ENCODE measurements at regions of chr3 and their contacts with region 1.

Region 1: GRCh38 chr3:178768072-178768864 is 232.0 kb downstream of the KCNMB2 start:
- DNase-seq: no peak

Region 2: DNA sequence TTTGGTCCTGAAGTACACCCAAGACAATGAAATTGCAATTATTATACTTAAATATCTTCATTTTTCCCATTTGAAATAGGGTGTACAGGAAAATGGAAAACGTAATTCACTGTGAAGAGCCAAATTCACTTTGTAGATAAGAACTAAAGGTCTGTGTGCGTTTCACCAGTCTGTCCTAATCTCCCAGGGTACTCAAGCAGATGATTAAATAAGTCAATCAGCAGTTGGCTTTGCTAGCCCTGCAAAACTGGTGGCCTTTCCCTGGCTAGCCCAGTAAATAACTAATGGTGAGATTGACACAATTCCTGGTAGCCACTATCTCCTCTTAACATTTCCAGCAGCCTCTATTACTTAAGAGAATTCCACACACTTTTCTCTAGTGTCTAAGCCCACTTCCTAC is 1960.3 kb before region 1 on chr3:
- intact Hi-C with region 1: loop called in 1 of 2 experiments (anchors 5 kb)
- DNase-seq: no peak

Region 3: DNA sequence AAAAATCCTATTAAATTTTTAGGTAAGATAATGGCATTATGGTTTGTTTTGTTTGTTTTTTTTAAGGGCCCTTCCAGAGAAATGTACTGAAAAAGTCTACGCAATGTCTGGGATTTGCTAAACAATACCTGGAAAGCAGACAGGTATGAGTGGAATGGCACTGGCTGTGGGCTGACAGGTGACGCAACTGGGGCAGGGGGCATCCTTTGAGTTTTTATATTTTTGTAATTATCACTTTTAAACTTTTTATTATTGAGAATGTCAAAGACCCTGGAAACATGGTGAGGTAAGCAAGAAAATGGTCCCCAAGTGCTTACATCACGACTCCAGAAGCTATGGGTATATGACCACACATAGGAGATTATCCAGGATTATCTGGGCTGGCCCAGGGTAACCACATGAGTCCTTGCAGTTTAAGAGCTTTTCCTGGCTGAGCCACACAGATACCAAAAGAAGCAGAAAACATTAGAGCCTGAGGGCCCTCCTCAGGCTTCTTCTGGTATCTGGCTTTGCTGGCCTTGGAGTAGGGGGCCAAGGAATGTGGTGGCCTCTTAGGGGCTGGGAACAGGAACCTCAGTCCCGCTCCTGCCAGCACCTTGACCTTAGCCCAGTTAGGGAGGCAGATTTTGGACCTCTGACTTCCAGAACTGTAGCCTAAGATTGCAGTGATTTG is 26.9 kb after region 1 on chr3:
- intact Hi-C with region 1: no loop called
- DNase-seq: no peak

Region 4: DNA sequence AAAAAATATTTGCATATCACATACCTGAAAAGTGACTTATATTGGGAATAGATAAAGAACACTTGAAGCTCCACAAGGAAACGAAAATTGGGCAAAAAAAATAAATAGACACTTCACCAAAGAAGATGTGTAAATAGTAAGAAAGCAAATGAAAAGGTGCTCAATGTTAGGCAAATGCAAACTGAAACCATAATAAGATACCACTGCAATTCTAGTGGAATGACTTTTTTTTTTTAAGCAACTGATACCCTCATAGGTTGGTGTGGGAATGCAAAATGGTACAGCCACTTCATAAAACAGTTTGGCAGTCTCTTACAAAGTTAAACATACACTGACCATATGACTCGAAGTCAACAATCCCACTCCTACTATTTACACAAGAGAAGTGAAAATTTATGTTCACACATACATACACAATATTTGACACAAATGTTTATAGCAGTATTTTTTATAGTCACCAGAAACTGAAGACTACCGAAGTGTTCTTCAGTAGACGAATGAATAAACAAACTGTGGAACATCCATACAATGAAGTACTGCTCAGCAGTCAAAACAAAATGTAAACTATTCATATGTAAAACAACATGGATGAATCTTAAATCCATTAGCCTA is 127.0 kb after region 1 on chr3:
- intact Hi-C with region 1: no loop called
- DNase-seq: no peak

Measured in posterior vena cava (tissue), 2 donors.